BJ (cell line): ENCODE measurements at regions of chr1 and their contacts with region 1.

Region 1: GRCh38 chr1:151254217-151255213 is at the start of gene PSMD4:
- DNase-seq: peak; percentile 86
- H3K4me3 ChIP-seq: peak within 1 kb of the TSS; percentile 96
- H3K27me3 ChIP-seq: no peaks in the 10 kb centered on the region
- CTCF ChIP-seq: 0 out of 2 replicates have a peak, but pooled peaks have one; percentile 9
- polyA plus RNA-seq, gene PSMD4: 199 and 255 TPM in 2 replicates

Region 2: DNA sequence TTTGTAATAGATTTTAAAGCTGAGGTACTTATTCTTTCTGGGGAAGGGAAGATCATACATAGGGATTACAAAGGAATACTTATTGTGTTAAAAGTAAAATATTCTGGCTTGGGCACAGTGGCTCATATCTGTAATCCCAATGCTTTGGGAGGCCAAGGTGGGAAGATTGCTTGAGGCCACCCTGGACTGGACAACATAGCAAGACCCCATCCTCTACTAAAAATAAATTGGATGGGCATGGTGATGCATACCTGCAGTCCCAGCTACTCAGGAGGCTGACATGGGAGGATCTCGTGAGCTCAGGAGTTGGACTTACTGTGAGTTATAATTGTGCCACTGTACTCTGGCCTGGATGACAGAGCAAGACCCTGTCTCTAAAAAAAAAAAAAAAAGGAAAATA is 156.4 kb before region 1 on chr1:
- CTCF ChIA-PET with region 1: interaction called, 10 read pairs
- POLR2A ChIA-PET with region 1: no interaction called
- DNase-seq: no peak
- H3K4me3 ChIP-seq: no peak overlapping the region
- H3K27me3 ChIP-seq: no peaks in the 10 kb centered on the region
- CTCF ChIP-seq: no peak

Region 3: GRCh38 chr1:151198255-151199127 is 56.0 kb before region 1 on chr1 and contains the start of gene PIP5K1A:
- CTCF ChIA-PET with region 1: interaction called, 43 read pairs
- POLR2A ChIA-PET with region 1: interaction called, 17 read pairs
- DNase-seq: peak; percentile 86
- H3K4me3 ChIP-seq: peak within 1 kb of the TSS; percentile 97
- H3K27me3 ChIP-seq: no peaks in the 10 kb centered on the region
- CTCF ChIP-seq: no peak
- polyA plus RNA-seq, gene PIP5K1A: 138 and 171 TPM in 2 replicates

Region 4: GRCh38 chr1:151238467-151238739 is 16.1 kb before region 1 on chr1:
- CTCF ChIA-PET with region 1: interaction called, 13 read pairs
- POLR2A ChIA-PET with region 1: interaction called, 3 read pairs
- DNase-seq: peak; percentile 71
- H3K4me3 ChIP-seq: no peak overlapping the region
- H3K27me3 ChIP-seq: no peaks in the 10 kb centered on the region
- CTCF ChIP-seq: no peak

Region 5: GRCh38 chr1:151243683-151244216 is 10.8 kb before region 1 on chr1:
- CTCF ChIA-PET with region 1: interaction called, 13 read pairs
- POLR2A ChIA-PET with region 1: no interaction called
- DNase-seq: no peak
- H3K4me3 ChIP-seq: no peak overlapping the region
- H3K27me3 ChIP-seq: no peaks in the 10 kb centered on the region
- CTCF ChIP-seq: no peak

Region 6: GRCh38 chr1:151281969-151282882 is 27.7 kb after region 1 on chr1 and contains the start of gene ZNF687:
- CTCF ChIA-PET with region 1: interaction called, 5 read pairs
- POLR2A ChIA-PET with region 1: interaction called, 15 read pairs
- DNase-seq: peak; percentile 99
- H3K4me3 ChIP-seq: peak within 1 kb of the TSS; percentile 92
- H3K27me3 ChIP-seq: no peaks in the 10 kb centered on the region
- CTCF ChIP-seq: 0 out of 2 replicates have a peak, but pooled peaks have one; percentile 3
- polyA plus RNA-seq, gene ZNF687: 12.5 and 19.8 TPM in 2 replicates